Heart right ventricle (tissue), 16 donors: ENCODE measurements at regions of chr18 and their contacts with region 1.

Region 1: DNA sequence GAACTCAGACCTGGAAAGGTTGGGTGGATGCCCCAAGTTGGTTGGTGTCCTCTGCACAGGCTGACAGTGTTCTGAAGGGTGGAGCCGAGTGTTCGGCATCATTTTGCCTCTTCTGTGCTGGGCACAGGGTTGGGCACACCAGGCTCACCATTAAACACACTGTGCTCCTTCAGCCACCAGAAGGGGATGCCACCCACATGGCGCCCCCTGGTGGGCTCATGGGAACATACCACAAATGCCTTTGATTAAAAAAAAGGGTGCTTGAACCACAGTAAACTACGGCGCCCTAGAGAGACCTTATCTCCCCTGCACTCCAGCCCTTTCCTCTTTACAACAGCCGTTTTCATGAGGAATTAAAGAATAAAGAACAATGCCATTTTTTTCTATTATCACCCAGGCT is 89.4 kb downstream of the CELF4 start:
- DNase-seq: no peak
- ATAC-seq: peak in 2 of 8 donors; percentile 25 to 27
- H3K4me3 ChIP-seq: no peak overlapping the region
- H3K27ac ChIP-seq: no peak overlapping the region
- H3K4me1 ChIP-seq: no peaks in the 10 kb centered on the region
- H3K27me3 ChIP-seq: peaks cover 0 to 51% (median 19%) of the 10 kb centered on the region in 7 donors
- CTCF ChIP-seq: peak in 8 of 9 donors; percentile 13 to 62 (median 49)

Region 2: DNA sequence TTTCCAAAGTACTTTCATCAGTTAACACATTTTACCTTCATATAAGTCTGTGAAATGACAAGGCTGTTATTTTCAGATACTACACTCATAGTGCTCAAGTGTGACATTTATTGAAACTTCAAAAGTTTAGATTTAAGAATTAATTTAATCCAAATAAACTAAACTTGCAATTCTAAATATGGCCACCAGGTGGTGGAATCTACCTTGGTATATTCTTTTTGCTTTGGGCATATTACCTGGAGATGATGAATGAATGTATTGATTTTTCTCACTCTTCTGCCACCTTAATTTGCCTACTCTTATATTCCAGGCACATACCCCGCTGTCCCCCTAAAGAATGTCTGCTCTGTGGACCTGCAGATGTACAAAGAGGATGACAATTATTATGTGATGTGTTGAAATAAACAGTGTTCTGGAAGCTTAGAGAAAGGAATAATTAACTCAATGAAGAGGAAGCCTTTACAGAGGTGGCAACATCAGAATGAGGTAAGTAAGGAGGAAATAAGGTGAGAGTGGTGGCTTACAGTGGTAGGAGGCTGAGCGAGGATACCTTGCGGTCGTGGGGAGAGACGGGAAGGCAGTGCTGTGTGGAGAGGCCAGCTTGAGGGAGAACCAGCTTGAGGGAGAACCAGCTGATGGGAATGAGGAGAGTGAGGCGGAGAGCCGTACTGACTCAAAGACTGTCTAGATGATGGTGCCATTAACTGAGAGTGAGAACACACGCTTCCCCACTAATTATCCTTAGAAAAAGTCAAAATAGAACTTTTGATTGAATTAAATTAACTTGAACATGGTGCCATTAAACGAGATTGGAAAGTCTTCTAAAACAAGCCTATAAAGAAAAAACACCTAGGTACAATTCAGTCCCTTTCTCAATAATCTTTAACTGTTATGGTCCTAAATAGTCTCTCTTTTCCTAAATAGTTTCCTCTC is 90.1 kb before region 1 on chr18:
- intact Hi-C with region 1: loop called in 8 of 10 experiments (anchors 2 to 10 kb)
- DNase-seq: no peak
- ATAC-seq: no peak
- H3K4me3 ChIP-seq: no peak overlapping the region
- H3K27ac ChIP-seq: no peak overlapping the region
- H3K4me1 ChIP-seq: no peaks in the 10 kb centered on the region
- H3K27me3 ChIP-seq: peaks cover 0 to 30% (median 14%) of the 10 kb centered on the region in 7 donors
- CTCF ChIP-seq: peak; percentile 66 to 89 (median 75)

Region 3: DNA sequence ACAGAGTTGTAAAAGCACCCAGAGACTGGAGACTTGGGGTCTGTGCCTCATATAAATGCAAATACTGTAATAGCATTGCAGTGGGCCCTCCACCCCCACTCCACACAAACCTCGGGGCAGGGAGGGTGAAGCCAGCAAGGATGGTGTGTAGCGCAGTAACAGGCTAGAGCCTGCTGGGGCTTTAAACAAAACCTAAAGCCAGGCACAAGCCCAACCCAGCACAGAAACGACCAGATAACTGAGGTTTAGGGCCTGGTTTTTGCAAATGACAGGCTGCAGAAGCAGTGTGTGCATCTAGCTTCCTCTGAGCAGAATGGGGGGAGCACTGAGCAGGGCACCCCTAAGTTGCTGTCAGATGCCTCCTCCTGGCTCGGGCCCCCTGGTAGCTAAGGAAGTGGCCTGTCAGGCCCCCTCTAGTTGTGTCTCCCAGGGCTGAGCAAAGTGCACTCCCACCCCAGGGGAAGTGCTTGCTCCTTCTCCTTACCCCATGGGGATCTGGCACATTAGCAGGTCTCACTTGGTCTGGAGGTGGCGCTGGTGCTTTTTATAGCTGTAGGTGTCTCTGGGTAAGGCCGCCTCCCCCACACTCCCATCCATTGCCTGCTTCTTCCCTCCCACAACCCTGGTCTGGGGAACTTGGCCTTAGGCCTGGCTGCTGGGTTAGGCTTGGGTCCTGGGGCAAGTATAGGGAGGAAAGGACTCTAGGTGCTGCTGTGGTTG is 45.7 kb before region 1 on chr18:
- intact Hi-C with region 1: loop called in 1 of 10 experiments (anchors 5 kb)
- DNase-seq: no peak
- ATAC-seq: no peak
- H3K4me3 ChIP-seq: no peak overlapping the region
- H3K27ac ChIP-seq: no peak overlapping the region
- H3K4me1 ChIP-seq: peaks cover 0 to 2% (median 0%) of the 10 kb centered on the region in 9 donors
- H3K27me3 ChIP-seq: peaks cover 0 to under 1% (median 0%) of the 10 kb centered on the region in 7 donors
- CTCF ChIP-seq: no peak

Region 4: DNA sequence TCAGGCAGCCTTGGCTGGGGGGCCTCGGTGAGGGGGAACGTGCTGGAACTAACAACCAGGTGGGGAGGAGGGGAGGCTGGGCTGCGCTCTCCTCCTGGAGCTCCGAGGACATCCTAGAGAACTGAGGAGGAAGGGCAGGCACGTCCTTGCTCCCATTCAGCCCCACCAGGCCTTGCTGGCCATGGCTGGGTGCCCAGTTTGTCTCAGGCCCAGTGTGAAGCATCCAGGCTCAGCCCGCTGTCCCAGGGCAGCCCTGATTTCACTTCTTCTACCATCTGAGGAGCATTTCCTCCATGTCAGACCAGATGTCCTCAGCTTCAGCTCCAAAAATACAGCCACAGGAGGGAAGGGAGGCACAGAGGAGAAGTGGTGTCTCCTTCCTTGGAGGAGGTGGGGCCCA is 36.0 kb before region 1 on chr18:
- intact Hi-C with region 1: loop called in 1 of 10 experiments (anchors 5 kb)
- DNase-seq: peak; percentile 13 to 25
- ATAC-seq: peak in 4 of 8 donors; percentile 23 to 57 (median 45)
- H3K4me3 ChIP-seq: no peak overlapping the region
- H3K27ac ChIP-seq: no peak overlapping the region
- H3K4me1 ChIP-seq: peaks cover 0 to 16% (median 0%) of the 10 kb centered on the region in 9 donors
- H3K27me3 ChIP-seq: peaks cover 0 to 14% (median 0%) of the 10 kb centered on the region in 7 donors
- CTCF ChIP-seq: no peak